GM10248 (cell line): ENCODE measurements at regions of chr3 and their contacts with region 1.

Region 1: DNA sequence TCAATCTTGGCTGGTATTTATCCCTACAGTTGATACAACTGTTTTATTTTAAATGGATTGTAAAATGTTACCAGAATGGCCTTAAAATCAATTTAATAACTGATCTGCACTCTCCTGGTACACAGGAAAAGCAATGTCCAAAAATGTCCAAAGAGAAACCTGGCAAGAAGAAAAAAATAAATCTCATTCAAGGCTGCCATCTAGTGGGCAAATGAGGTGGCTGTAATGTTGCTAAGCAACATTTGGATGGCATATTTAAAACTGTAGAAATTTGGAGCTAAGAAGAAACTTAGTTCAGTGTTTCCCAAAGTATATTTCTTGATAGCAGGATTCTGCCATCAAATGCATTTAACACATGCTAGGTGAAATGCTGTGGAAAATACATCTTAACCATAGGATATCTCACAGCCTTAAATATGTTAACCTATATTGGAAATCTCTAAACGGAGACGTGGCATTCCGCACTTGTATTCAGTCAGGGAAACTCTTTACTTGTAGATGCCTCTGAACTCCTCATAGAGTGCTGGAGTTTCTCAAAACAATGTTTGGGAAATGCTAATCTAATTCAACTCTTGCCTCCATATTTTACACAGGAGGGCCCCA is 216.8 kb downstream of the ERC2 start:
- DNase-seq: peak; percentile 40
- CTCF ChIP-seq: peak; percentile 76

Region 2: DNA sequence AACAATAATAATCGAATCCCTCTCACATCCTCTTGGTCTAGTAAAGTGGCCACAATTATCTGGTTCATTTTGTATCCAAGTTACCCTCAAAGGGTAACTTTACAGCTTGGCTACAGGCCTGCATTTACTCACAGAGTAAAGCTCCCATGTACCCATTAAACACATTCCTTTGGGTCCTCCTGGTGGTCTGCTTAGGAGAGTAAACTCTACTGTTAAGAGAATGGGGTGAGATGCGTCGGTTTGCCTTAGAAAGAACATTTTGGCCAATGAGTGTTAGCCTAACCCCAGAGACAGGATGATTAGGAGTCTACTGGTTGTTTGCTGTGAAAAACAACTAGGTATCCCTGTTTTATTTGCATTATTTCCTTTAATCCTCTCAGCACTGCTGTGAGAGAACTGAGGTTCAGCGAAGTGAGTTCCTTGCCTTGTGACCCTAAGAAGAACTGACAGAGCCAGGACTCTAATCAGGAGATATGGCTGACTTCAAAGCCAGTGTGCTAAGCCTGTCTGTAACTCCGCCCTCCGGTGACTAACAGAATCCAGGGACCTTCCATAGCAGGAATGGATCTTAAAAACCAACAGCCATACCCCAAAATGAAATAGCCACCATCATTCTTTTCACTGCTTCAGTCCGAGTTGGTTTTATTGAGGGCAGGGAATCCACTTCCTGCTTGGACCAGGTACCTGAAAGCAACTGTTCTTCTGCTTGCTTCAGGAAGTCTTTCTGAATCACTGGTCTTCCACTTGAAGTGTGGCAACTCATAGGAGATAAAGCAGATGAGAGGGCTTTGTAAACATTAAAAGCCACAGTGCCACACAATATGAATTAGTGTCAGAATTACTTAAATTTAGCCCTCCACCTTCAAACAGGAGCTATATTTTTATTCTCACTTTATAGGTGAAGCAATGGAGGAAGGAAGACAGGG is 447.0 kb before region 1 on chr3:
- CTCF ChIA-PET with region 1: no interaction called
- POLR2A ChIA-PET with region 1: no interaction called
- DNase-seq: no peak
- CTCF ChIP-seq: no peak

Region 3: DNA sequence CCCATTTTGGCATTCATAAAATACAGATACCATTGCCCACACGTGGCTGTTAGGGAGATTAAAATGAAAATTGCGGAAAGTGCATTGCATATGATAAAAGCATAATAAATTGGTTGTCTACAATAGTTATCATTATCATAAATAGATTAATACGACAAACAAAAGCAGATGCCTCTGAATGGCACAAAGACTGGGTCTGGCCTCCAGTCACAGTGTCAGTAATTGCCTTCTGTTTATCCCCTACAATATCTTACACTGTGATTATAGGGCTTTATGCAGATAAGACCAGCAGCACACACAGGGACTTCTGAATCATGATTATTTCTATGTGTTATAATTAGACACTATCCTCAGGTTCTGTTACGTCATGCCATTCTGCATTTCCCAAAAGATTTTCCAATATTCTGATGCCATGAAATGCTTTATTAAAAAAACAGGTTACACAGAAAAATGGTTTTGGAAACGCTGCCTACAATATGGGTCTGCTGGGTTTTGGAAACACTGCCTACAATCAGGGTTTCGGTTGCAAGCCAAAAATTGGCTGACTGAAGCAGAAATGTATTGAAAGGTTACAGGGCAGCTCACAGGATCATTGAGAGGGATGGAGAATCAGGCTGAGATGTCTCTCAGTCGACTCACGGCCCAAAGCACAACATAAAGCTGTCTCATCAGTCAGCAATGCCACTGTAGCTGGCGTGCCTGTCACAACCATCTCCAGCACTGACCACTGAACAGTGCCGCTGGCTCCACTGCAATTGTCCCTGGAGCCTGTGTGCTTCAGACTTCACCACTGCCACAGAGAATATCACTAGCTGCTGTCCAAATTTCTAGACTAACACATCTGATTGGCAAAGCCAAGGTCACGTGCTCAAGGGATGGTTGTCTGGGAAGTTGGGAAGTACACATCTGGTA is 31.3 kb before region 1 on chr3:
- CTCF ChIA-PET with region 1: no interaction called
- POLR2A ChIA-PET with region 1: no interaction called
- DNase-seq: no peak
- CTCF ChIP-seq: no peak

Region 4: DNA sequence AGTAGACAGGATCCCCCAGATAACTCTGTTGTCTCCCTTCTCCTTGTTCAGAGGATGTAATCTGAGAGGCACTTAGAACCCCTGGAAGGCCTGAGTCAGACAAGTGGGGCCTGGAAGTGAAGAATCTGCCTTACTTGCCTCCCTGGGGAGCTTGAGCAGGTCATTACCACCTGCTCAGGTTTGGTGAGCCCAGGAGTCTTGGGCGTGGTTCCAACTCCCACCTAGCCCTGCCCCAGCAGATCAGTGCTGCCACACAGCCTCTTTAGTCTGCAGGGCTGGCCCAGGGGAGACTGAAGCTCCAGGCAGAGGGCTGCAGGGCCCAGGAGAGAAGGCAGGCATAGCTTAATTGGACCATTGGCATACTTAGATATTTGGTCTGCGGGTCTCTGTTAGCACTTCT is 13.1 kb before region 1 on chr3:
- CTCF ChIA-PET with region 1: interaction called, 14 read pairs
- POLR2A ChIA-PET with region 1: no interaction called
- DNase-seq: no peak
- CTCF ChIP-seq: no peak

Region 5: GRCh38 chr3:56314842-56315241 is 63.4 kb after region 1 on chr3:
- CTCF ChIA-PET with region 1: no interaction called
- POLR2A ChIA-PET with region 1: no interaction called
- DNase-seq: no peak
- CTCF ChIP-seq: no peak

Region 6: DNA sequence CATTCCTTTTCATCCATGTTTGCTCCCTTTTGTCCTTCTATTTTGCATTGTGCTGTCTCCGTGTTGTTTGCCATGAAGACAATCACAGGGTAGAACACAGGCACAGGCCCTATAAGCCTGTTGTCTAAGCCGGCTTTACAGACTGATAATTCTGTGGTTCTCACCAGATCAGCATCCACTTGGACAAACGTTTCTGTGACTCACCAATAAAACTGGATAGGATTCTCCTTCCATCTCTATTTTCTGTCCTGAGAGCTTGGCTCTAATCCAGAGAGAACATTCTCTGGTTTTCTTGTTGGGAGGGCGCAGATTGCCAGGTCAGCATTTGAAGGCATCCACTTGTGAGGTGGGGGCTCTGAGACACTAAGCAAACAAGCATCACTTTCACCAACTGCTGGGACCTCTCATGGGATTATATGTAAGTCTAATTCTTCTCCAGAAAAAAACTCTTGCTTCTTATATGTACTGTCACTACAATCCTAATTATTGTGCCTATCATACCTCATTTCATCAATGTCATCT is 115.3 kb after region 1 on chr3:
- CTCF ChIA-PET with region 1: no interaction called
- POLR2A ChIA-PET with region 1: no interaction called
- DNase-seq: no peak
- CTCF ChIP-seq: no peak